A673 (cell line): ENCODE measurements at regions of chr2 and their contacts with region 1.

Region 1: GRCh38 chr2:96265840-96266679 is at the starts of genes CIAO1 and TMEM127:
- DNase-seq: peak; percentile 99
- H3K4me3 ChIP-seq: peak within 1 kb of the TSS; percentile 98
- H3K27ac ChIP-seq: peak within 1 kb of the TSS; percentile 85
- H3K4me1 ChIP-seq: no peaks in the 10 kb centered on the region
- H3K27me3 ChIP-seq: no peaks in the 10 kb centered on the region
- CTCF ChIP-seq: peak; percentile 43
- total RNA-seq, gene CIAO1: 76.8 and 79.7 TPM in 2 replicates
- total RNA-seq, gene TMEM127: 23.6 and 25.5 TPM in 2 replicates

Region 2: DNA sequence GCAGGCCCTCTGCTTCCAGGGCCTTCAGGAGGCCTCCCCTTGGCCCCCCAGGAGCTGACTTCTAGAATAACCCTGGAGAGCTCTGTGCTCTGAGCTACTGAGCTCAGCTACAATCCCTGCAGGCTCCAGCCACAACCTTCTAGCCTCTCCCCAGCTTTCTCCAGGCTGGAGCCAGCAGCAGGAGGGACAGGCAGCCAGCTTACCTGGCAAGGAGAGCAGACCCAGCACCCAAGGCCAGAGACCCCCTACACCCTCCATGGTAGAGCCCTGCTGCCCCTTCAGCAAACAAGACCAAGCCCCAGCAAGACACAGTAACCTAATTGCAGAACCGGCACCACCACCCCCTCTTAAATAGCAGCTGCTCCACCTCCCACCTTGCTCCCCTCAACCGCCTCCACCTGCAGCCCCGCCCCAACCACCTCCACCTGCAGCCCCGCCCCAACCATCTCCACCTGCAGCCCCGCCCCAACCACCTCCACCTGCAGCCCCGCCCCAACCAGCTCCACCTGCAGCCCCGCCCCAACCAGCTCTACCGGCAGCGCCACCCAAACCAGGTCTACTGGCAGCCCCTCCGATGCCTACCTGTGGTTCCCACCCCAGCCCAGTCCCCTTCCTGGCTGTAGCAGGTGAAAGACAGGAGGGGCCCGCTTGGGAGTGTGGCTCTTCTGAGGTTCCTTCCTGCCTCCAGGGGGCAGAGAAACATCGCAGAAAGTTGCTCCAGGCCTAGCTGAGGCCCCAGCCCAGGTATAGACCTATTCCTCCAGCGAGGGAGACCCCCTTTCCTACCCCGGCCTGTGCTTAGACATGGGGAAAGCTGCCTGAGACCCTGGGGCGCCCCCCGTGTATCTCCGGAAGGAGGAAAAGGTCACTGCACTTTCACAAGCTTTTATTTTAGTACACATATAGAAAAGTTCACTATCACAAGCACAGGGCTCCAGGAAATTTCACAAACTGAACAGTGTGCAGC is 127.6 kb before region 1 on chr2 and contains the start of gene ASTL:
- CTCF ChIA-PET with region 1: interaction called, 8 read pairs
- POLR2A ChIA-PET with region 1: no interaction called
- intact Hi-C with region 1: loop called (anchors 2 kb)
- DNase-seq: peak; percentile 57
- H3K4me3 ChIP-seq: no peak within 1 kb of the TSS
- H3K27ac ChIP-seq: no peak within 1 kb of the TSS
- H3K4me1 ChIP-seq: no peaks in the 10 kb centered on the region
- H3K27me3 ChIP-seq: no peaks in the 10 kb centered on the region
- CTCF ChIP-seq: peak; percentile 68
- total RNA-seq, gene ASTL: not detected in 2 replicates

Region 3: GRCh38 chr2:96208143-96209010 is 57.7 kb before region 1 on chr2 and contains the start of gene STARD7:
- CTCF ChIA-PET with region 1: interaction called, 5 read pairs
- POLR2A ChIA-PET with region 1: no interaction called
- intact Hi-C with region 1: loop called (anchors 5 kb)
- DNase-seq: peak; percentile 98
- H3K4me3 ChIP-seq: peak within 1 kb of the TSS; percentile 80
- H3K27ac ChIP-seq: peak within 1 kb of the TSS; percentile 85
- H3K4me1 ChIP-seq: peaks cover 21% of the 10 kb centered on the region
- H3K27me3 ChIP-seq: no peaks in the 10 kb centered on the region
- CTCF ChIP-seq: no peak
- total RNA-seq, gene STARD7: 189 and 201 TPM in 2 replicates

Region 4: DNA sequence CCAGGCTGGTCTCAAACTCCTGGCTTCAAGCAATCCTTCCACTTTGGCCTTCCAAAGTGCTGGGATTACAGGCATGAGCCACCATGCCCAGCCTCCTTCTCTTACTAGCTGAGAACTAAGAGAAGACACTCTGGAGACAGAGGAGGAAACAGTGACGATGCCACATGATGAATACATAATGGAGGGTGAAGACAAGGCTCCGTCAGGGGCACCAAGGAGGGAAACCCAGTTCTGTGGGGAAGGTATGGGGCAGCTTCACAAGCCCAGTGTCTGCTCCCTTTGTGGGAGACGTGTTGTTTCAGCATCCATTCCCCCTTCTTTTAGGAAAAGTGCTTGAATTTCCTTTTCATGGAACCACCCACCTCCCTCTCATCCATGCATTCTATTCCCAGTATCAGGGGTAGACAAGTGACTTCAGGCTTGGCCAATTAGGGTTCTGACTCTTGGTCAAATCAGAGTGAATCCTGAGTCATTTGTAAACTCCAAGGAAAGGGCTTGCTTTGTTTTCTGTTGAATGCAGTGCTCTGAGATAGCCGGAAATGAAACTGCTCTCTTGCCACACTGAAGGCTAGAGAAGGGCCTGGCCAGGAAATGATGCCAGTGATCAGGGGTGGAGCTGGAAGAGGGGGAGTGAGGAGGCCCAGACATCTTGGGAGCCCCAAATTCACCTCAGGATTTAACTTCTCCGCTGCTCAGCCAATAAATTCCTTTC is 24.0 kb before region 1 on chr2:
- CTCF ChIA-PET with region 1: interaction called, 10 read pairs
- POLR2A ChIA-PET with region 1: no interaction called
- intact Hi-C with region 1: no loop called
- DNase-seq: peak; percentile 43
- H3K4me3 ChIP-seq: no peak overlapping the region
- H3K27ac ChIP-seq: peak overlapping the region; percentile 67
- H3K4me1 ChIP-seq: peaks cover 7% of the 10 kb centered on the region
- H3K27me3 ChIP-seq: no peaks in the 10 kb centered on the region
- CTCF ChIP-seq: no peak

Region 5: GRCh38 chr2:96305091-96305978 is 39.3 kb after region 1 on chr2 and contains the start of gene SNRNP200:
- CTCF ChIA-PET with region 1: no interaction called
- POLR2A ChIA-PET with region 1: no interaction called
- intact Hi-C with region 1: loop called (anchors 1 kb)
- DNase-seq: peak; percentile 96
- H3K4me3 ChIP-seq: peak within 1 kb of the TSS; percentile 94
- H3K27ac ChIP-seq: peak within 1 kb of the TSS; percentile 90
- H3K4me1 ChIP-seq: peaks cover 15% of the 10 kb centered on the region
- H3K27me3 ChIP-seq: no peaks in the 10 kb centered on the region
- CTCF ChIP-seq: no peak
- total RNA-seq, gene SNRNP200: 202 and 208 TPM in 2 replicates

Region 6: DNA sequence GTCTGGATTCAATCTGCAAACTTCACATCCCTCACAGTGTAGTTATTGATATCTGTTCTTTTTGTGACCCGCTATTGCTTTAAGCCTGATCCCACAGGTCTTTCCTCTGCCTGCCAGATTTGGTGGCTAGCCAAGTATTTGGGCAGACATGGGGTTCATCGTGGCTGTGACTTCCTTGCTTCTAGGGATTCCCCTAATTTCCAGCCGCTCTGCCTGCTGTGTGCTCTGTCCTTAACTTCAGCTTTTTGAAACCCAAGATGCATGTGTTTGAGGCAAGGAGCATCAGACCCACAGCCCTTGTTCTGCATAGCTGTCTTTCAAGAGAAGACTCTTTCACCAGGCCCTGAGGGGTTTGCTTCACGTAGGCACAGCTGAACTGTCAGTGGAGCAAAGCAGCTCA is 123.7 kb after region 1 on chr2:
- CTCF ChIA-PET with region 1: no interaction called
- POLR2A ChIA-PET with region 1: no interaction called
- intact Hi-C with region 1: no loop called
- DNase-seq: no peak
- H3K4me3 ChIP-seq: no peak overlapping the region
- H3K27ac ChIP-seq: no peak overlapping the region
- H3K4me1 ChIP-seq: peaks cover 5% of the 10 kb centered on the region
- H3K27me3 ChIP-seq: no peaks in the 10 kb centered on the region
- CTCF ChIP-seq: no peak